Endothelial cell of umbilical vein (primary cell): ENCODE measurements at regions of chr2 and their contacts with region 1.

Region 1: GRCh38 chr2:68031542-68032160 is 31.2 kb downstream of the C1D start:
- DNase-seq: peak; percentile 79
- H3K4me3 ChIP-seq: no peak overlapping the region
- H3K27ac ChIP-seq: no peak overlapping the region
- H3K4me1 ChIP-seq: peaks cover 6% of the 10 kb centered on the region
- H3K27me3 ChIP-seq: no peaks in the 10 kb centered on the region
- CTCF ChIP-seq: peak; percentile 19 to 34
- POLR2A ChIP-seq: no peak

Region 2: DNA sequence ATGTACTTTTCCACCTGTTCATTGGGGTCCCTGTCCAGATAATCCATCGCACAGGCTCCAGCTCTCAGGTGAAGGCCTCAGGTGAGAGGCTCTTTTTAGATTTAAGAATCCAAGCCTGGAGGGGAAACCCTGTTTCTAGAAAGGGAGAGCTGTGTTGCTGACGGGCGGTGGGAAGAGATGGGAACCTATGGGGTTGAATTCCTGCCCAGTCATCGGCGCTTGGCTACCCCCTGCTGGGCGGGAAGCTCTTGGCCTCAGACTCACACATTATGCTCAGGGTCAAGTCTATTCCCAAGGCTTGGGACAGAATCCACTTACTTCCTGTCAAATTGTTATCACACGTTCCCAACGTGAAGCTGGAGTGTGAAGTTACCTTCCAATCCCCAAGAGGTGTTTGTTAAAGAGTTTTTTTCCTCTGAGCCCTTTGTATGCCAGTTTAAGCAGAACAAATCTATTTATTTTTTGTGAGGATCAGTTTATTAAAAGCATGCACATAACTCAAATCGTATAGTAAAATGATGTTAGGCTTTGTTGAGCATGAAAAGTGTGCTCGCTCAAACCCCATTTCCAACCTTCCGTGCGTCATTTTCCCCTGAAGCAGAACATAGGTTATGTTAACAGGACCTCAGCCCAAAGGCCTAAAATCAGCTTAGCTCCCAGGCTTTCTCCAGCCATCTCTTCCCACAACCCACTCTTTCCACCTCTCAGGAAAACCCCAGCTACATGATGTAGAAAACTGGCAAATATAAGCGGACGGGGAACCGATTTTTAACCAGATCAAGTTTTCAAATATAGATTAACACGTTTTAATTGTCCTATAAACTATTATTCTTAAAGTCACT is 816.2 kb before region 1 on chr2:
- CTCF ChIA-PET with region 1: interaction called, 6 read pairs
- POLR2A ChIA-PET with region 1: no interaction called
- dilution Hi-C with region 1: no loop called
- intact Hi-C with region 1: loop called (anchors 5 kb)
- DNase-seq: peak; percentile 77
- H3K4me3 ChIP-seq: no peak overlapping the region
- H3K27ac ChIP-seq: no peak overlapping the region
- H3K4me1 ChIP-seq: no peaks in the 10 kb centered on the region
- H3K27me3 ChIP-seq: no peaks in the 10 kb centered on the region
- CTCF ChIP-seq: peak; percentile 74 to 85
- POLR2A ChIP-seq: no peak

Region 3: DNA sequence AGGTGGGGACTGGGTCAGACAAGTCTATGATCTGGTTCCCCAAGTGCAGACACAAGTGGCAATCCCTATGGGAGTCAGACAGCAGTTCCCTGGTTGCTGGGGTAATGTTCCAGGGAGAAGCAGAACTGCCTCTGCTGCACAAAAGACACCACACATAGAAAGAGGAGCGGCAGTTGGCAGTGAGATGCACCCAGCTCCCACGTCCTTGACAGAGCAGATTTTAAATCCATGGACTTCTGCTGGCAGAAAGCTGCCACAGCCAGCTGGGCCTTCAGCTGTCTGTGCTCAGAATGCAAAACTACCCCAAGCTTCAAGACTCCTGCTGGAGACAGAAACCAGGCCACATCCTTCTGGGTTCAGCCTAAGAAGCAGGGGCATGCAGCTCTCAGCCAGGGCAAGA is 487.4 kb before region 1 on chr2:
- CTCF ChIA-PET with region 1: no interaction called
- POLR2A ChIA-PET with region 1: no interaction called
- dilution Hi-C with region 1: no loop called
- intact Hi-C with region 1: no loop called
- DNase-seq: no peak
- H3K4me3 ChIP-seq: no peak overlapping the region
- H3K27ac ChIP-seq: no peak overlapping the region
- H3K4me1 ChIP-seq: no peaks in the 10 kb centered on the region
- H3K27me3 ChIP-seq: no peaks in the 10 kb centered on the region
- CTCF ChIP-seq: no peak
- POLR2A ChIP-seq: no peak

Region 4: GRCh38 chr2:67650291-67651133 is 381.1 kb before region 1 on chr2:
- CTCF ChIA-PET with region 1: interaction called, 25 read pairs
- POLR2A ChIA-PET with region 1: no interaction called
- dilution Hi-C with region 1: no loop called
- intact Hi-C with region 1: loop called (anchors 10 kb)
- DNase-seq: peak; percentile 65
- H3K4me3 ChIP-seq: no peak overlapping the region
- H3K27ac ChIP-seq: no peak overlapping the region
- H3K4me1 ChIP-seq: no peaks in the 10 kb centered on the region
- H3K27me3 ChIP-seq: no peaks in the 10 kb centered on the region
- CTCF ChIP-seq: peak; percentile 55 to 67
- POLR2A ChIP-seq: no peak

Region 5: GRCh38 chr2:67846370-67847070 is 185.1 kb before region 1 on chr2:
- CTCF ChIA-PET with region 1: interaction called, 82 read pairs
- POLR2A ChIA-PET with region 1: interaction called, 3 read pairs
- dilution Hi-C with region 1: no loop called
- intact Hi-C with region 1: loop called (anchors 1 kb)
- DNase-seq: peak; percentile 96
- H3K4me3 ChIP-seq: peak overlapping the region in 1 of 3 experiments; percentile 14
- H3K27ac ChIP-seq: peak overlapping the region; percentile 44
- H3K4me1 ChIP-seq: peaks cover 6% of the 10 kb centered on the region
- H3K27me3 ChIP-seq: no peaks in the 10 kb centered on the region
- CTCF ChIP-seq: peak; percentile 68 to 71
- POLR2A ChIP-seq: no peak

Region 6: GRCh38 chr2:67917332-67918054 is 114.2 kb before region 1 on chr2:
- CTCF ChIA-PET with region 1: interaction called, 32 read pairs
- POLR2A ChIA-PET with region 1: no interaction called
- dilution Hi-C with region 1: no loop called
- intact Hi-C with region 1: loop called (anchors 1 kb)
- DNase-seq: peak; percentile 90
- H3K4me3 ChIP-seq: no peak overlapping the region
- H3K27ac ChIP-seq: peak overlapping the region; percentile 96
- H3K4me1 ChIP-seq: peaks cover 28% of the 10 kb centered on the region
- H3K27me3 ChIP-seq: no peaks in the 10 kb centered on the region
- CTCF ChIP-seq: no peak
- POLR2A ChIP-seq: no peak